PC-9 (cell line): ENCODE measurements at regions of chr2 and their contacts with region 1.

Region 1: GRCh38 chr2:182949572-182950189 is 83.2 kb upstream of the FRZB start:
- DNase-seq: peak; percentile 58 to 60
- H3K4me3 ChIP-seq: no peak overlapping the region
- H3K27ac ChIP-seq: peak overlapping the region; percentile 55
- H3K4me1 ChIP-seq: peaks cover 11% of the 10 kb centered on the region
- H3K27me3 ChIP-seq: no peaks in the 10 kb centered on the region
- CTCF ChIP-seq: no peak

Region 2: GRCh38 chr2:182784777-182785176 is 164.9 kb before region 1 on chr2:
- CTCF ChIA-PET with region 1: no interaction called
- POLR2A ChIA-PET with region 1: no interaction called
- intact Hi-C with region 1: no loop called
- DNase-seq: peak in 1 of 2 experiments; percentile 46
- H3K4me3 ChIP-seq: no peak overlapping the region
- H3K27ac ChIP-seq: no peak overlapping the region
- H3K4me1 ChIP-seq: no peaks in the 10 kb centered on the region
- H3K27me3 ChIP-seq: no peaks in the 10 kb centered on the region
- CTCF ChIP-seq: peak; percentile 81

Region 3: GRCh38 chr2:182866461-182867406 is 82.9 kb before region 1 on chr2 and contains the start of gene FRZB:
- CTCF ChIA-PET with region 1: no interaction called
- POLR2A ChIA-PET with region 1: no interaction called
- intact Hi-C with region 1: no loop called
- DNase-seq: peak in 1 of 2 experiments; percentile 28
- H3K4me3 ChIP-seq: no peak within 1 kb of the TSS
- H3K27ac ChIP-seq: no peak within 1 kb of the TSS
- H3K4me1 ChIP-seq: no peaks in the 10 kb centered on the region
- H3K27me3 ChIP-seq: no peaks in the 10 kb centered on the region
- CTCF ChIP-seq: no peak
- total RNA-seq, gene FRZB: 0.15 TPM in 2 replicates

Region 4: DNA sequence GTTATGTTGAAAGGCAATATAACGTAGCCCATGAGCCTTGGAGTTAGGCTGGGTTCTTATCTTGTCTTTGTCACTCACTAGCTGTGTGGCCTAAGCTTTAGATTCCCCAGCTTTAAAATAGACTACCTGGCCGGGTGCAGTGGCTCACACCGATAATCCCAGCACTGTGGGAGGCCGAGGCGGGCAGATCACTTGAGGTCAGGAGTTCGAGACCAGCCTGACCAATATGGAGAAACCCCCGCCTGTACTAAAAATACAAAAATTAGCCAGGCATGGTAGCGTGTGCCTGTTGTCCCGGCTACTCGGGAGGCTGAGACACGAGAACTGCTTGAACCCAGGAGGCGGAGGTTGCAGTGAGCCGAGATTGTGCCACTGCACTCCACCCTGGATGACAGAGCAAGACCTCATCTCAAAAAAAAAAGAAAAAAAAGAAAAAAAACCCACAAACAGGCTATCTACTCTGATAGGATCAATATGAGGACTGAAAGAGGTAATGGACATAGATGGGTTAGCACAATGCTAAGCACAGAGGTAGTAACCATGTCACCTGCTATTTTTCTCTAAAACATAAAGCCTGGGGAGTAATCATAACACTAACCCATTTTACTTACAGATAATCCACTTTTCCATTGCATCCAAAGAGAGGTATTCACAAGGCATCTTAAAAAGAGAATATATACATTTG is 44.7 kb after region 1 on chr2:
- CTCF ChIA-PET with region 1: no interaction called
- POLR2A ChIA-PET with region 1: interaction called, 6 read pairs
- intact Hi-C with region 1: loop called (anchors 5 kb)
- DNase-seq: no peak
- H3K4me3 ChIP-seq: no peak overlapping the region
- H3K27ac ChIP-seq: no peak overlapping the region
- H3K4me1 ChIP-seq: no peaks in the 10 kb centered on the region
- H3K27me3 ChIP-seq: no peaks in the 10 kb centered on the region
- CTCF ChIP-seq: no peak

Region 5: GRCh38 chr2:183149489-183149888 is 199.8 kb after region 1 on chr2:
- CTCF ChIA-PET with region 1: no interaction called
- POLR2A ChIA-PET with region 1: no interaction called
- intact Hi-C with region 1: no loop called
- DNase-seq: no peak
- H3K4me3 ChIP-seq: no peak overlapping the region
- H3K27ac ChIP-seq: no peak overlapping the region
- H3K4me1 ChIP-seq: no peaks in the 10 kb centered on the region
- H3K27me3 ChIP-seq: no peaks in the 10 kb centered on the region
- CTCF ChIP-seq: no peak